MCF 10A (cell line): ENCODE measurements at regions of chr7 and their contacts with region 1.

Region 1: GRCh38 chr7:155951554-155952158 is 139.4 kb upstream of the SHH start:
- DNase-seq: peak; percentile 97
- H3K4me3 Mint-ChIP-seq: peak overlapping the region; percentile 52
- H3K27ac Mint-ChIP-seq: peak overlapping the region; percentile 90
- H3K4me1 Mint-ChIP-seq: peaks cover 28% of the 10 kb centered on the region
- H3K27me3 Mint-ChIP-seq: peaks cover 5% of the 10 kb centered on the region
- CTCF ChIP-seq: no peak

Region 2: DNA sequence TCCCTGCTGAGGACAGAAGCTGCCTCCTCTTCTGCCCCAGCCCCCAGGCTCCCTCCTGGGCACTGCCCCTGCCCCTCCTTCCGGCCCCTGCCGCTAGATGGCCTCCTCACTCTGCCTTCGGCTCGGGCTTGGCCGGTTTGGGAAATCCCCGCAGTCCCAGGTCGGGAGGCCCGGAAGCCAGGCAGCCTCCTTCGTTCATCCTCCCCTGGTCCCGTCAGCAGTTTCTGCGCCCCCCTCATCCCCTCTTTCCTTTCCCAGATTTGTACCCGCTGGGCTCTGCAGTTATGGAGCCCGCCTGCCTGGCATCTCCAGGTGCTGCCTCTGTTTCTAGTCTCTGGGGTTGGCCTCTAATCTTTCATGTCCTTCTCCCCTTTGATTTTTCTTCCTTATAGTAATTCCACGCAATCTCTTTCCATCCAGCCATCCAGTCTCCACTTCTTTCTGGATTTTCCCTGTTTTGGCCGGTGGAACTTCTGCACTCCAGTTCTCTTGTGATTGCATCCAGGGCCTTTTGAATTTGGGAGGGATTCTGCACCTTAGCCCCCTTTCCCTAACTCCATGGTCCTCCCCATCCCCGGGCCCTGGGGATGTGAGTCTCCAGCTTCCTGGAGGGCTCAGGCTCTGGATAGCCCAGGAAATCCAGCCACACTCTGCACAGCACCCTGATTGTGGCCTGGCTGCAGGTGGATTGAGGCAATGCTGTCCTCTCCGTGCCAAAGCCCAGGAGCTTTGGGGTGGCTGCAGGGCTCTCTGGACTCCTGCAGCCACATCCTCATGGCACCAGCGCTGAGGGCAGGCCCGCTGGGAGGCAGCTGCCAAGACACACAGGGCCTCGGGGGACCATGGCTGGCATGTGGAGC is 136.1 kb before region 1 on chr7:
- CTCF ChIA-PET with region 1: no interaction called
- POLR2A ChIA-PET with region 1: no interaction called
- intact Hi-C with region 1: loop called (anchors 5 kb)
- DNase-seq: peak; percentile 74
- H3K4me3 Mint-ChIP-seq: no peak overlapping the region
- H3K27ac Mint-ChIP-seq: no peak overlapping the region
- H3K4me1 Mint-ChIP-seq: peaks cover 11% of the 10 kb centered on the region
- H3K27me3 Mint-ChIP-seq: peaks cover 30% of the 10 kb centered on the region
- CTCF ChIP-seq: peak; percentile 91

Region 3: GRCh38 chr7:155860840-155861479 is 90.7 kb before region 1 on chr7:
- CTCF ChIA-PET with region 1: interaction called, 3 read pairs
- POLR2A ChIA-PET with region 1: interaction called, 19 read pairs
- intact Hi-C with region 1: loop called (anchors 2 kb)
- DNase-seq: peak; percentile 98
- H3K4me3 Mint-ChIP-seq: peak overlapping the region; percentile 45
- H3K27ac Mint-ChIP-seq: peak overlapping the region; percentile 62
- H3K4me1 Mint-ChIP-seq: no peaks in the 10 kb centered on the region
- H3K27me3 Mint-ChIP-seq: peaks cover 6% of the 10 kb centered on the region
- CTCF ChIP-seq: no peak

Region 4: DNA sequence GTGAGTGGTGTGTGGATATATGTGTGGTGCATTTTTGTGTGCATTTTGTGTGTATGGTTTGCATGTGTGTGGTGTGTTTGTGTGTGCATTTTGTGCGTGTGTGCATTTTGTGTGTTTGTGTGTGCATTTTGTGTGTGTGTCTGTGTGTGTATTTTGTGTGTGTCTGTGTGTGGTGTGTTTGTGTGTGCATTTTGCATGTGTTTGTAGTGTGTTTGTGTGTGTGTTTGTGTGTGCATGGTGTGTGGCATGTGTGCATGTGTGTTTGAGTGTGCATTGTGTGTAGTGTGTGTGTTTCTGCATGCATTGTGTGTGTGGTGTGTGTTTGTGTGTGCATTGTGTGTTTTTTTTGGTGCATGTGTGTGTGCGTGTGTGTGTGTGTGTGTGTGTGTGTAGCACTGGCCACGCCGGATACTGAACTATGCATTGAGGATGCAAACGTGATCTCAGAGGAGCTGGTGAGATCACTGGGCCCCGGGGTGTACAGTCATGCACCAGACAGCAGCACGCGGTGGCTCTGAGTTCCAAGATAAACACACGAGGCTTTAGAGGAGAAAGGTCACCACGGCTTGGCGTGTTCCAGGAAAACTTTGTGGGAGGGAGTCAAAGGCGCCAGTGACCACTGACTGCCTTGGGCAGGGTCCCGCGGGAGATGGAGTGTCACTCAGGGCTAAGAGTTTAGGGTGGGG is 32.8 kb before region 1 on chr7:
- CTCF ChIA-PET with region 1: no interaction called
- POLR2A ChIA-PET with region 1: interaction called, 4 read pairs
- intact Hi-C with region 1: loop called (anchors 1 kb)
- DNase-seq: peak; percentile 96
- H3K4me3 Mint-ChIP-seq: no peak overlapping the region
- H3K27ac Mint-ChIP-seq: peak overlapping the region; percentile 75
- H3K4me1 Mint-ChIP-seq: peaks cover 31% of the 10 kb centered on the region
- H3K27me3 Mint-ChIP-seq: no peaks in the 10 kb centered on the region
- CTCF ChIP-seq: no peak

Region 5: DNA sequence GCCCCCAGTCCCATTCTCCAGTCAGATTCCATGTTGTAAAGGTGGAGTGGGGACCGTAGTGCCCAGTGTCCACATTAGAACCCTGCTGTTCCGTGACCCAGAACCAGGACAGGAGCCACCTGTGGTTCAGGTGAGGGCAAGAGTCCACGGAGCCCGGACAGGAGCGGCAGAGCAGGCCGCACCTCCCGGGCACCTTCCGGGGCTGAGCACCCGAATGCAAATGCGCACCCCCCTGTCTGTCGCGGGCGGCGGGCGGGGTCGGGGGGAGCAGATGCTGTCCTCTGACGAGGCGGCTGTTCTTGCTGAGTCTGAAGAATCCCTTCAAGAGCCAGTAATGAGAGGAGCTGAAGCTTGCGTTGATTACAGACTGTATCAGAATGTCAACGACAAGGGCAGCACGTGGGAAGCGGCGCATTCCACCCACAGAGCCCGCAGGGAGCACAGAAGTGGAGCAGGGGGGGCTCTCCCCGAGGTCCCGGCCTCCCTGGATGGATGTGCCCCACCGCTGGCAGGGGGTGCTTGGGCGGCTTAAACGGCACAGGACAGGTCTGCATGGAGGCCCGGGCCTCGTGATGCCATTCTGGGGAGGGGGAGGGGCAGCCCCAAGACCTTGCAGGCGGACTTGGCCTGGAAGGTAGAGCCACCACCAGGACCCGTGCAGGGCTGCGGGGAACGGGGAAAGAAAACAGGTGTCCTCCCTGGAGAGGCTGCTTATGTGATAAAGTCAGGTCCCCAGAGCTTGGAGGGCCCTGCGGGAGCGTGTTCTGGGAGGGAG is 281.5 kb after region 1 on chr7:
- CTCF ChIA-PET with region 1: no interaction called
- POLR2A ChIA-PET with region 1: no interaction called
- intact Hi-C with region 1: no loop called
- DNase-seq: no peak
- H3K4me3 Mint-ChIP-seq: no peak overlapping the region
- H3K27ac Mint-ChIP-seq: no peak overlapping the region
- H3K4me1 Mint-ChIP-seq: no peaks in the 10 kb centered on the region
- H3K27me3 Mint-ChIP-seq: peaks cover 26% of the 10 kb centered on the region
- CTCF ChIP-seq: no peak